CD8-positive, alpha-beta T cell (primary cell): ENCODE measurements at regions of chr9 and their contacts with region 1.

Region 1: DNA sequence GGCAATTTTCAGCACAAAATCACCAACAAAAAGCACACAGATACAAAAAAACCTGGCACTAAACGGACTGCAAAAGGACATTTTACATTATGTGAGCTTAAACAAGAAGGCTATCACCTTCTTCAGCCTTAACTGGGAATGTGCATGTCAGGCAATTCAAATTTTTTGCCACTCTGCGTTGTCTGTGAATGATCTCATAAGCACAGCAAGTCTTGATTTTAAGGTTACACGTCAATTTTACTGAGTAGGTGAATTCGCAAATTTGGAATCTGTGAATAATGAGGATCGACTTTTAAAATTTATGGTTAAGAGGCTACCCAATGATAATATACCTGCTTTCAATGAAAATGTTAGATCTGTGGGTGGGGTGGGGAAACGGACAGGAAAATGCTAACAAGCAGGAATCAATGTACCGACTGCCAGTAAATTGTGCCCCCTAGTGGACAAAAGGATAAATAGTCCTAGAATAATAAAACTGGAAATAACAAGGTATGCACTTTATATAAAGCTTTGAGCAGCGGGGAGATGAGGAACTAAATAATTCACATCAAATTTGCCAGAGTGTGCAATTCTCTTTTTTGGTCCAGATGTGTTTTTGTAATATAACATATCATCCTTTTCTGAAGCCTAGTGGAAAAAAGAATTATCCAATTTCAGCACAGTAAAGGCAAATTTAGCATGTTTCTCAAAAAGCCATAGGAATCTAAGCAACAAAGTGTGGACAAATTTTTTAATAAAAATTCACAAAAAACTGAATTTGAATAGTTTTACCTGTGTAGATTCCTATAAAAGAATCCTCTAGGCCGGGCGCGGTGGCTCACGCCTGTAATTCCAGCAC is 20.5 kb downstream of the EQTN start:
- DNase-seq: peak in 2 of 9 experiments; percentile 37 to 48
- ATAC-seq: no peak
- H3K4me3 ChIP-seq: no peak overlapping the region
- H3K4me3 Mint-ChIP-seq: no peak overlapping the region
- H3K27ac ChIP-seq: no peak overlapping the region
- H3K27ac Mint-ChIP-seq: no peak overlapping the region
- H3K4me1 ChIP-seq: no peaks in the 10 kb centered on the region
- H3K4me1 Mint-ChIP-seq: peaks cover 3% of the 10 kb centered on the region
- H3K27me3 ChIP-seq: no peaks in the 10 kb centered on the region
- H3K27me3 Mint-ChIP-seq: peaks cover 4% of the 10 kb centered on the region
- CTCF ChIP-seq: peak; percentile 70

Region 2: DNA sequence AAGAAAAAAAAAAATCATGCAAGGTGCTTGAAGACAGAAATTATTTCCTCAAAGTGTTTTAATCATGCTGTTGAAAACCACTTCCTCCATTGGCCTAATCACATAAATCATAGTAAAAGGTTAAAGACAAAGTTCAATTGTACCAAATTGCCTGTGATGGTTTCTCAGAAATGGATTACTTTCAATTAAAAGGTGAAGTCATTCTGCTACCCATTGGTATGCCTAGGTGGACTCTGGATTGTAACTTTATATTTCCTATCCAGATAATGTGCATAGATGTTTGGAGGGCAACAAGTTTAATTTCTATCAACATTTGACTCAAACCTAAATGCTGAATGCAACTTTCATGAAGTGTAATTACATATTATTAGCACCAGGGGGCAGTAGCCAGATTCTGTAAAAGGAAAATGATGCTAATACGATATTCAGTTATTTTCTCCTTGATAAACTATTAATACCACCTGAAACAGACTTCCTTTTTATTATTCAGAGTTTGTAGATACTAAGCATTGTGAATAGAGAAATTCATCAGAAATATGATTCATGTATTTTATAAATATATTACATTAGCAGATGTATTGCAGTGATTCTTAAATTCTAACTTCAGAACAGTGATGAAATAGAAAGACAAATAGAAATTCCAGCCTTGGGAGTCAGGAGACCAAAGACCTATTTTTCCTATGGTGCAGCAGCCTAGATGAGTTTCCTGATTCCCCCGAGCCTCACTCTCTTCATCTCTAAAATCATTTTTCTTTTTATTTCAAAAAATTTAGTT is 532.0 kb before region 1 on chr9:
- CTCF ChIA-PET with region 1: interaction called, 3 read pairs
- POLR2A ChIA-PET with region 1: no interaction called
- intact Hi-C with region 1: loop called in 1 of 2 experiments (anchors 1 kb)
- DNase-seq: peak in 2 of 9 experiments; percentile 20 to 32
- ATAC-seq: no peak
- H3K4me3 ChIP-seq: no peak overlapping the region
- H3K4me3 Mint-ChIP-seq: no peak overlapping the region
- H3K27ac ChIP-seq: no peak overlapping the region
- H3K27ac Mint-ChIP-seq: no peak overlapping the region
- H3K4me1 ChIP-seq: no peaks in the 10 kb centered on the region
- H3K4me1 Mint-ChIP-seq: peaks cover 3% of the 10 kb centered on the region
- H3K27me3 ChIP-seq: no peaks in the 10 kb centered on the region
- H3K27me3 Mint-ChIP-seq: no peaks in the 10 kb centered on the region
- CTCF ChIP-seq: peak; percentile 91

Region 3: GRCh38 chr9:26892251-26893029 is 384.0 kb before region 1 on chr9 and contains the start of gene CAAP1:
- CTCF ChIA-PET with region 1: no interaction called
- POLR2A ChIA-PET with region 1: no interaction called
- intact Hi-C with region 1: loop called in 1 of 2 experiments (anchors 5 kb)
- DNase-seq: peak; percentile 80 to 96 (median 93)
- ATAC-seq: peak; percentile 93
- H3K4me3 ChIP-seq: peak within 1 kb of the TSS; percentile 96
- H3K4me3 Mint-ChIP-seq: peak within 1 kb of the TSS; percentile 98
- H3K27ac ChIP-seq: peak within 1 kb of the TSS; percentile 98 to 99
- H3K27ac Mint-ChIP-seq: peak within 1 kb of the TSS; percentile 99
- H3K4me1 ChIP-seq: peaks cover 19% of the 10 kb centered on the region
- H3K4me1 Mint-ChIP-seq: peaks cover 42% of the 10 kb centered on the region
- H3K27me3 ChIP-seq: no peaks in the 10 kb centered on the region
- H3K27me3 Mint-ChIP-seq: no peaks in the 10 kb centered on the region
- CTCF ChIP-seq: peak; percentile 40
- total RNA-seq, gene CAAP1: 13.4 to 15.1 TPM

Region 4: DNA sequence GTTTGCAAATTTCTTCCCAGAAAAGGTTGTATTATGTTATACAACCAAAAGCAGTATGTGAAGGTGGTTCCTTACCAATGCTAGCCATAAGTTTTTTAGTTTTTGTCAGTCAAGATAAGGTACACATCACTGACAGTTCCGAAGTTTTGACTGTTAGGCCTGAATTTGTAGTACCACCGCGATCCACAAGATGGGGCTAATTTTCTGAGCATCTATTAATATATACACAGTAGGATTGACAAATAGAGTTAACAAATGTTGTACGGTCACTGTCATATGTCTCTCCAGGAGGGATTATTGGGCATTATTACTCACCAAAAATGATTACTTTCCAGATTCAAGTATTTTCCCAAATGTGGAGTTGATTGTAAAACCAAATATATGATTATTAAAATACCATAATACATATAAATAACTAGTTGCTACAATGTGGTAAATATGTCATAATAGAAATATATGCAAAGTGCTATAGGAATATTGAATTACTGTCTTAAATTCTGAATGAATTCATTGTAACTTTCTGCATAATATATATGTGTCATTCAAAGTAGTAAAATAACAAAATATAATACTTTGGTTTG is 242.5 kb before region 1 on chr9:
- CTCF ChIA-PET with region 1: no interaction called
- POLR2A ChIA-PET with region 1: no interaction called
- intact Hi-C with region 1: loop called in 1 of 2 experiments (anchors 10 kb)
- DNase-seq: peak in 8 of 9 experiments; percentile 1 to 52 (median 36)
- ATAC-seq: no peak
- H3K4me3 ChIP-seq: no peak overlapping the region
- H3K4me3 Mint-ChIP-seq: no peak overlapping the region
- H3K27ac ChIP-seq: no peak overlapping the region
- H3K27ac Mint-ChIP-seq: no peak overlapping the region
- H3K4me1 ChIP-seq: no peaks in the 10 kb centered on the region
- H3K4me1 Mint-ChIP-seq: no peaks in the 10 kb centered on the region
- H3K27me3 ChIP-seq: no peaks in the 10 kb centered on the region
- H3K27me3 Mint-ChIP-seq: no peaks in the 10 kb centered on the region
- CTCF ChIP-seq: peak; percentile 67